Calu3 (cell line): ENCODE measurements at regions of chr9 and their contacts with region 1.

Region 1: DNA sequence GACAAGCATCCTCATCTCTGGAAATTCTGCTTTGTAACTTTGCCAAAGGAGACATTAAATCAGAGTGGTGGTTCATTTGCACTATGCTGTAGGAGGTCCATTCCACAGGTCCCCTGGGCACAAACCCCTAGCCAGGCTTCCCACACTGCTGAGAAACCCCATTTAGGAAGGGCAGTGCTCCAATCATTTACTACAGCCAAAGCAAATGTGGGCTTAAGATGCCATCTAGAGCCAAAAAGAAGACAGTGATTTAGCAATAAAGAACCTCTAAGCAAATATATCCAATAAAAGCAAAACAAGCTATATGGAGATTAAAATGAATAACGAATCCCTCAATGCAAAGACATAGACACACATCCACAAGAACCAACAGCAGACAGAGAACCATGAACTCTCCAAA is 129.0 kb upstream of the ALDH1B1 start:
- DNase-seq: peak; percentile 1
- H3K4me3 Mint-ChIP-seq: no peak overlapping the region
- H3K27ac Mint-ChIP-seq: no peak overlapping the region
- H3K4me1 Mint-ChIP-seq: no peaks in the 10 kb centered on the region
- H3K27me3 Mint-ChIP-seq: no peaks in the 10 kb centered on the region
- CTCF ChIP-seq: no peak

Region 2: DNA sequence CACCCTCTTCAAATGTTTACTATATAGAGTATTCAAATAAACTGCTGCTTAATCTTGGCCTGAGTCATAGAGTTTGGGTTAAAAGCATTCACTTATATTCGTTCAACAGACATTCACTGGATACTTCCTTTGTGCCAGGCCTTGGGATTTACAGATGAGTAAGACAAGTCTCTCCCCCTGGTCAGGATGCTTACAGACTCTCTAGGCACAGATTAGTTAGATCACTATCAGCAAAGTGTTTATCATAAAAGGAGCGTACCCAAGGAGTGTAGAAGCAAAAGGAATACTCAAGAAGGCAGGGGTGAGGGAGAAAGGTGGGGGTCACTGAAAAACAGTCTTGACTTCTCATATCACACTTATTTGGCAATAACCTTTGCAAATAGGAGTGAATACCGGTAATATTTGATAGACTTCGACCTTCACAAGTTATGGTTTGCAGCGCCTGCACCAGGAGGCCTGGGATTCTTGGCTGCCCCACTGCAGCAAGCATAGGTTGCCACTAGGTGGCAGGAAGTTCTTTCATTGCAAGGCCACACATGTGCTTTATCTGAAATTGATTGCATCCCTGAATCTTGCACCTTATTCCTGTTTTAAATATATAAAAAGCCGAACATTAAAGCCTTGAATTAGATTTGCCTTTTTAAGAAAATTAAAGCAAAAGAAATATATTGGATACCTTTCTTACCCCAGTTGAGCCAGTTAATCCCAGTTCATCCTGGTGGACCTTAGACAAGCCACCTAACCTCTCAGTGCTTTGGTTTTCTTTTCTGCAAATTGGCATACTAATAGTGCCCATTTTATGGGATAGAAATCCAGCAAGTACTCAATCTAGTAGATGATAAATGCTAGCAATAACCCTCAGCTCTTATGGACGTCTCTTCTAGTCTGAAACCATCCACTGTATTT is 516.4 kb before region 1 on chr9:
- CTCF ChIA-PET with region 1: no interaction called
- intact Hi-C with region 1: loop called (anchors 10 kb)
- DNase-seq: peak; percentile 34
- H3K4me3 Mint-ChIP-seq: no peak overlapping the region
- H3K27ac Mint-ChIP-seq: no peak overlapping the region
- H3K4me1 Mint-ChIP-seq: no peaks in the 10 kb centered on the region
- H3K27me3 Mint-ChIP-seq: no peaks in the 10 kb centered on the region
- CTCF ChIP-seq: no peak

Region 3: GRCh38 chr9:38088006-38088925 is 175.3 kb before region 1 on chr9:
- CTCF ChIA-PET with region 1: no interaction called
- intact Hi-C with region 1: loop called (anchors 10 kb)
- DNase-seq: peak; percentile 67
- H3K4me3 Mint-ChIP-seq: no peak overlapping the region
- H3K27ac Mint-ChIP-seq: no peak overlapping the region
- H3K4me1 Mint-ChIP-seq: no peaks in the 10 kb centered on the region
- H3K27me3 Mint-ChIP-seq: no peaks in the 10 kb centered on the region
- CTCF ChIP-seq: peak; percentile 58